GM18951 (cell line): ENCODE measurements at regions of chr21 and their contacts with region 1.

Region 1: DNA sequence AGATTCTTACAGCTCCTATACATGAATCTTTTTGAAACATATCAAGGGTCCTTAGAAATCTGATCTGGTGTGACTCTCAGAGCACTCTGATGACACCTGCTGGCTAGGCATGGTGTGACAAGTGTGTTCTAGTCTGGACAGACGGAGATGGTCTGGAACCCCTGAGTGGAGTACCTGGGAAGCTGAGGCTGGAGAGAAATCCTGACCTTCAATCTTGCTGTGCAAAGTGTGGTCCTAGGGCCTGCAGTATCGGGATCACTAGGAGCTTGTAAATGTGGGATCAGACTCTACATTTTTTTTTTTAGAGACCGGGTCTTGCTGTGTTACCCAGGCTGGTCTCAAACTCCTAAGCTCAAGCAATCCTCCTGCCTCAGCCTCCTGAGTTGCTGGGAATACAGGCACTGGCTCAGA is 78.6 kb upstream of the SOD1 start:
- POLR2A ChIP-seq: no peak

Region 2: GRCh38 chr21:31198575-31198974 is 382.3 kb before region 1 on chr21:
- in situ Hi-C with region 1: loop called (anchors 5 kb)
- POLR2A ChIP-seq: no peak

Region 3: DNA sequence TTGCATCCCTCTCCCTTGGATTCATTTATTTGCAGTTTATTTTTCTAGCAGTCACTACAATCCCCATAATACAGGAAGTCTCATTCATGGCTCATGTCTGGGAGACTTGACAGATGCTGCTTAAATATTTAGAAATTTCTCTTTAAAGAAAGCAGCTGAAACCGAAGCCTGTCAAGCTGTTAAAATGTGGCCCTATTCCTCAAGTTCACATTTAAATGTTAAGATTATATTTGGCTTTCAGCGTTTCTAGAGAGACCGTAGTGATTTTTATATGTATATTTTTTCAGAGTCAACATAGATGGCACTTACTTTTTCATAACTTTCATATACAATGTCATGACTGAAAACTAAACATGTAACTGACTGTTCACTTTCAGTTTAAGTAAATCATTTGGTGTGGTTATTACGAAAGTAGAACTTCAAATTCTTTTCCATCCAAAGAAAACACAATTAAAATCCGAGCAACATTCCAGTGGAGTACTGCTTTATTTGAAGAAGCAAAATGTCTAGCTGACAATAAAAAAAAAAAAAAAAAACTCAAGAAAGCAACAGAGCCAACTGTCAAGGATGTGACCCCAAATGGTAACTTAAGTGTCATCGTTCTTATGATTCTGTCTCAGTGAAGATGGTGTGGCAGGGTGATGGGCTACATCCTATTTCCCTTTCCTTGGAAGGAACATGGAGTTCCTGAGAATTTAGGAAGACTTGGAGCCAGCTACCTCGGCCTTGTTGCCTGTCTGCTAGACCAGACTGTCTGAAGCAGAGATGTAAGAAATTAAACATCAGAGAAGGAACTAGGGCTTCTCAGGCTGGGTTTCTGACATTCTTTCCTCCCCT is 660.2 kb after region 1 on chr21:
- in situ Hi-C with region 1: no loop called
- POLR2A ChIP-seq: no peak